ENCODE measurements at regions of chr15 and their contacts with region 1.

Region 1: GRCh38 chr15:75625542-75626347 is at the start of gene SNUPN:
- DNase-seq: peak; percentile 91
- ATAC-seq: peak; percentile 91
- H3K4me3 ChIP-seq: peak within 1 kb of the TSS; percentile 89 to 100 (median 100)
- H3K27ac ChIP-seq: peak within 1 kb of the TSS; percentile 99
- H3K4me1 ChIP-seq: peaks cover 20% of the 10 kb centered on the region
- H3K27me3 ChIP-seq: no peaks in the 10 kb centered on the region; a peak in 1 of 5 replicates
- CTCF ChIP-seq: no peak
- EP300 ChIP-seq: peak in 1 of 2 experiments; percentile 52; a peak in 1 of 4 replicates
- POLR2A ChIP-seq: peak; percentile 45 to 76; a peak in 3 of 4 replicates
- RAD21 ChIP-seq: peak; percentile 9; the same call in 1 of the 2 replicates
- total RNA-seq, gene SNUPN: 16.4 and 18.3 TPM in 2 replicates

Region 2: DNA sequence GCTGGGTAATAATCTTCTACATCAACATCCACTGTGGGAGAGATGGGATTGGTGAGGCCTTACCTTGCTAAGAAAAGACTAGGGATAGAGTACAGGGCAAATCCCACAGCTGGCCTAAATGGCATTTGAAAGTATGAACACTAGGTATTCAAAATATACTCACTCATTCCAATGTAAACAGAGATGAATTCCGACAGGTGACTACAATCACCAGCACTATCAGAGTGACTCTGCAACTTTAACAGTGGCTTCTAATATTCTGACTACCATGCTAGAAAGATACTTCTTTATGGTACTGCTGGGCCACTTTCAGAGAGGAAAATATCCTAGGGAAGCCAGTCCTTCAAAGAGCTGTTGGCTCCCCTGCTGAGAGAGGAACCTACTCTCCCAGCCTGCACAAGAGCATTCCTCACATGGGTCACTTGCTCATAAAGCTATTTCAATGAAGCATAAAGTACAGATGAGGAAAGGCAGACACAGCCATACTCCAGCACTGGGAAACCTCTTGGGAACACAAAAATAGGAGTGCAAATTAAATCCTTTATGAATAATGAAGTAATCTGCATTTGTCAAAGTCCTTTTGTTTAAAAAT is 235.9 kb before region 1 on chr15:
- CTCF ChIA-PET with region 1: no interaction called
- POLR2A ChIA-PET with region 1: no interaction called
- in situ Hi-C with region 1: no loop called
- intact Hi-C with region 1: no loop called
- DNase-seq: no peak
- ATAC-seq: no peak
- H3K4me3 ChIP-seq: no peak overlapping the region
- H3K27ac ChIP-seq: no peak overlapping the region
- H3K4me1 ChIP-seq: no peaks in the 10 kb centered on the region
- H3K27me3 ChIP-seq: no peaks in the 10 kb centered on the region
- CTCF ChIP-seq: no peak
- EP300 ChIP-seq: no peak
- POLR2A ChIP-seq: no peak
- RAD21 ChIP-seq: no peak

Region 3: DNA sequence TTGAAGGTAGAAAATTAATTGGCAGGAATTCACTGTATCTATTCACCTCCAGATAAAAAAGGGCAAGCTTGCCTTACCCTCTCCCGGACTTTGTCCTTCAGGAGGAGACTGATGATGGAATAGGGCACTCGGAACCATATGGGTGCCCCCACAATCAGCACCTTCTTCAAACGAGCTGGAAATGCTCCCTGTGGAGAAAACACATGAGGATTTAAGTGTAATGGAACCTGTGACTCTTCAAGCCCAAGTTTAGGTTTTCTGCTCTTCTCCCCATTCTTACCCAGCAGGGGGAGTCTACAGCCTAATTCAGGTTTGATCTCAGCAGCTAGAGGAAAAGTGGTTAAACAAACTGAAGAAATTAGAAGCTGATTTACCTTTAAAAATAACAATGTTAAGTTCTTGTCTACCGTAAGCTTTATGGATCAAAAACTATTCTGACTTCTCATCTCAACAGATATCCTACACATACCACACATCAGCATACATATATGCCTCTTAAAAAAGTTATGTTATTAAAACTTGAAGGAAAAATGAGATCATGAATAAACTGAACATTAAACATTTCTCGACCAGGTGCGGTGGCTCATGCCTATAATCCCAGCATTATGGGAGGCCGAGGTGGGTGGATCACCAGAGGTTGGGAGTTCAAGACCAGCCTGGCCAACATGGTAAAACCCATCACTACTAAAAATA is 116.8 kb before region 1 on chr15:
- CTCF ChIA-PET with region 1: no interaction called
- POLR2A ChIA-PET with region 1: no interaction called
- in situ Hi-C with region 1: no loop called
- intact Hi-C with region 1: loop called (anchors 5 kb)
- DNase-seq: peak; percentile 23
- ATAC-seq: no peak
- H3K4me3 ChIP-seq: no peak overlapping the region
- H3K27ac ChIP-seq: no peak overlapping the region
- H3K4me1 ChIP-seq: no peaks in the 10 kb centered on the region
- H3K27me3 ChIP-seq: no peaks in the 10 kb centered on the region
- CTCF ChIP-seq: peak; percentile 38
- EP300 ChIP-seq: no peak
- POLR2A ChIP-seq: no peak
- RAD21 ChIP-seq: no peak

Region 4: GRCh38 chr15:75578948-75579920 is 46.5 kb before region 1 on chr15 and contains the start of gene PTPN9:
- CTCF ChIA-PET with region 1: no interaction called
- POLR2A ChIA-PET with region 1: interaction called, 10 read pairs
- in situ Hi-C with region 1: no loop called
- intact Hi-C with region 1: loop called (anchors 5 kb)
- DNase-seq: peak; percentile 66
- ATAC-seq: peak; percentile 88
- H3K4me3 ChIP-seq: peak within 1 kb of the TSS; percentile 74 to 100 (median 87)
- H3K27ac ChIP-seq: peak within 1 kb of the TSS; percentile 93
- H3K4me1 ChIP-seq: peaks cover 37% of the 10 kb centered on the region
- H3K27me3 ChIP-seq: no peaks in the 10 kb centered on the region; a peak in 2 of 5 replicates
- CTCF ChIP-seq: peak; percentile 57
- EP300 ChIP-seq: no peak
- POLR2A ChIP-seq: peak in 1 of 2 experiments; percentile 28; a peak in 2 of 4 replicates
- RAD21 ChIP-seq: no peak
- total RNA-seq, gene PTPN9: 16.5 and 16.6 TPM in 2 replicates

Region 5: GRCh38 chr15:75738647-75739331 is 113.0 kb after region 1 on chr15:
- CTCF ChIA-PET with region 1: no interaction called
- POLR2A ChIA-PET with region 1: no interaction called
- in situ Hi-C with region 1: no loop called
- intact Hi-C with region 1: no loop called
- DNase-seq: peak; percentile 80
- ATAC-seq: peak; percentile 98
- H3K4me3 ChIP-seq: peak overlapping the region; percentile 66 to 85 (median 83); a peak in 5 of 6 replicates
- H3K27ac ChIP-seq: no peak overlapping the region
- H3K4me1 ChIP-seq: peaks cover 18% of the 10 kb centered on the region
- H3K27me3 ChIP-seq: peaks cover 0 to 5% of the 10 kb centered on the region in 2 experiments; a peak in 1 of 5 replicates
- CTCF ChIP-seq: peak; percentile 18; the same call in 1 of the 2 replicates
- EP300 ChIP-seq: no peak
- POLR2A ChIP-seq: no peak
- RAD21 ChIP-seq: no peak

Measured in HepG2 (cell line).